CD4-positive, alpha-beta T cell (primary cell): ENCODE measurements at regions of chr2 and their contacts with region 1.

Region 1: DNA sequence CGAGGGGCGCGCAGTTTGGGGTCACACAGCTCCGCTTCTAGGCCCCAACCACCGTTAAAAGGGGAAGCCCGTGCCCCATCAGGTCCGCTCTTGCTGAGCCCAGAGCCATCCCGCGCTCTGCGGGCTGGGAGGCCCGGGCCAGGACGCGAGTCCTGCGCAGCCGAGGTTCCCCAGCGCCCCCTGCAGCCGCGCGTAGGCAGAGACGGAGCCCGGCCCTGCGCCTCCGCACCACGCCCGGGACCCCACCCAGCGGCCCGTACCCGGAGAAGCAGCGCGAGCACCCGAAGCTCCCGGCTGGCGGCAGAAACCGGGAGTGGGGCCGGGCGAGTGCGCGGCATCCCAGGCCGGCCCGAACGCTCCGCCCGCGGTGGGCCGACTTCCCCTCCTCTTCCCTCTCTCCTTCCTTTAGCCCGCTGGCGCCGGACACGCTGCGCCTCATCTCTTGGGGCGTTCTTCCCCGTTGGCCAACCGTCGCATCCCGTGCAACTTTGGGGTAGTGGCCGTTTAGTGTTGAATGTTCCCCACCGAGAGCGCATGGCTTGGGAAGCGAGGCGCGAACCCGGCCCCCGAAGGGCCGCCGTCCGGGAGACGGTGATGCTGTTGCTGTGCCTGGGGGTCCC is at the start of gene ITGA4:
- DNase-seq: peak; percentile 77 to 94 (median 86)
- ATAC-seq: peak; percentile 84
- H3K4me3 ChIP-seq: peak within 1 kb of the TSS; percentile 91
- H3K4me3 Mint-ChIP-seq: peak within 1 kb of the TSS; percentile 93
- H3K27ac ChIP-seq: peak within 1 kb of the TSS; percentile 73 to 93
- H3K27ac Mint-ChIP-seq: peak within 1 kb of the TSS; percentile 84
- H3K4me1 ChIP-seq: peaks cover 23% of the 10 kb centered on the region
- H3K4me1 Mint-ChIP-seq: peaks cover 77% of the 10 kb centered on the region
- H3K27me3 ChIP-seq: no peaks in the 10 kb centered on the region
- H3K27me3 Mint-ChIP-seq: no peaks in the 10 kb centered on the region
- CTCF ChIP-seq: peak; percentile 81
- total RNA-seq, gene ITGA4: 79.4 to 79.5 TPM

Region 2: DNA sequence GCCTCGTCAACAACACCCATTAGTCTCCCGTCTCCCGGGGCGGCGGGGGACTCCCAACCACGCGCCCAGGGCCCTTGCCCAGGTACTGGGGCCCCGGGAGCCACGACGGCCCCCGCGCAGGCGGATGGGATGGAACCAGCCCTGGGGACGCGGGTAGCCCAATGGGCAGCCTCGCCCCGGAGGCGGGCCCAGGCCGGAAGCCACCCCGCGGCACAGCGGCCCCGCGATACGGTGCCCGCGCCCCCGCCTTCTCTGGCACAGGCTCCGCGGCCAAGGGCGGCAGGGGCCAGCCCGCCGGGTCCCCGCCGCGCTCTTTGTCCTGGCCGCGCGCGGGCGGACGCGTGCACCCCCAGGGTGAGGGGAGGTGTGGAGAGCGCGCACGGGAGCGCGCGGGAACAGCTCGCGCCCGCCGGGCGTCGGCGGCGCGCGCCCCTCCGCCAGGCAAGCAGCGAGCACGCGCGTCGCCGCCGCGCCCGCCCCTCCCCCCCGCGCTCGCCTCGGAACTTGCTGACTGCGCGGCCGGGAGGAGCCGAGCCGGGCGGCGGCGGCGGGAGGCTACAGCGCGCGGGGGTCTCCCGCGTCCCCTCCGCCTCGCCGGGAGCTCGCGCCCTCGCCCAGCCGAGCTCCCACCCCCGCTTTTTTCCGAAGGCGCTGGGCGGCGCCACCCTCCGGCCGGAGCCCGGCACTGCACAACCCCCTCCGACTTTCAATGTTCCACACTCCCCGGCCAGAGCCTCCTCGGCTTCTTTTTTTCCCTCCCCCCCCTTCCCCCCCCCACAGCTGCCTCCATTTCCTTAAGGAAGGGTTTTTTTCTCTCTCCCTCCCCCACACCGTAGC is 476.9 kb before region 1 on chr2 and contains the start of gene UBE2E3:
- CTCF ChIA-PET with region 1: interaction called, 4 read pairs
- POLR2A ChIA-PET with region 1: interaction called, 10 read pairs
- intact Hi-C with region 1: loop called (anchors 5 to 10 kb)
- DNase-seq: peak; percentile 62 to 90 (median 70)
- ATAC-seq: peak; percentile 77
- H3K4me3 ChIP-seq: peak within 1 kb of the TSS; percentile 77
- H3K4me3 Mint-ChIP-seq: peak within 1 kb of the TSS; percentile 94
- H3K27ac ChIP-seq: peak within 1 kb of the TSS in 1 of 2 donors; percentile 20
- H3K27ac Mint-ChIP-seq: peak within 1 kb of the TSS; percentile 92
- H3K4me1 ChIP-seq: peaks cover 17% of the 10 kb centered on the region
- H3K4me1 Mint-ChIP-seq: peaks cover 49% of the 10 kb centered on the region
- H3K27me3 ChIP-seq: no peaks in the 10 kb centered on the region
- H3K27me3 Mint-ChIP-seq: no peaks in the 10 kb centered on the region
- CTCF ChIP-seq: peak; percentile 39
- total RNA-seq, gene UBE2E3: 20.5 TPM

Region 3: GRCh38 chr2:181104512-181105115 is 352.6 kb before region 1 on chr2:
- CTCF ChIA-PET with region 1: interaction called, 20 read pairs
- POLR2A ChIA-PET with region 1: interaction called, 24 read pairs
- intact Hi-C with region 1: loop called (anchors 2 kb)
- DNase-seq: peak in 4 of 14 experiments; percentile 49 to 79 (median 75)
- ATAC-seq: peak; percentile 49
- H3K4me3 ChIP-seq: no peak overlapping the region
- H3K4me3 Mint-ChIP-seq: no peak overlapping the region
- H3K27ac ChIP-seq: no peak overlapping the region
- H3K27ac Mint-ChIP-seq: no peak overlapping the region
- H3K4me1 ChIP-seq: peaks cover 19% of the 10 kb centered on the region
- H3K4me1 Mint-ChIP-seq: peaks cover 43% of the 10 kb centered on the region
- H3K27me3 ChIP-seq: no peaks in the 10 kb centered on the region
- H3K27me3 Mint-ChIP-seq: no peaks in the 10 kb centered on the region
- CTCF ChIP-seq: peak; percentile 98

Region 4: GRCh38 chr2:181178823-181179412 is 278.3 kb before region 1 on chr2:
- CTCF ChIA-PET with region 1: interaction called, 3 read pairs
- POLR2A ChIA-PET with region 1: no interaction called
- intact Hi-C with region 1: loop called in 1 of 2 experiments (anchors 5 kb)
- DNase-seq: peak in 11 of 14 experiments; percentile 9 to 71 (median 28)
- ATAC-seq: peak; percentile 81
- H3K4me3 ChIP-seq: no peak overlapping the region
- H3K4me3 Mint-ChIP-seq: no peak overlapping the region
- H3K27ac ChIP-seq: no peak overlapping the region
- H3K27ac Mint-ChIP-seq: peak overlapping the region; percentile 53
- H3K4me1 ChIP-seq: peaks cover 7% of the 10 kb centered on the region
- H3K4me1 Mint-ChIP-seq: peaks cover 47% of the 10 kb centered on the region
- H3K27me3 ChIP-seq: no peaks in the 10 kb centered on the region
- H3K27me3 Mint-ChIP-seq: no peaks in the 10 kb centered on the region
- CTCF ChIP-seq: peak; percentile 59

Region 5: DNA sequence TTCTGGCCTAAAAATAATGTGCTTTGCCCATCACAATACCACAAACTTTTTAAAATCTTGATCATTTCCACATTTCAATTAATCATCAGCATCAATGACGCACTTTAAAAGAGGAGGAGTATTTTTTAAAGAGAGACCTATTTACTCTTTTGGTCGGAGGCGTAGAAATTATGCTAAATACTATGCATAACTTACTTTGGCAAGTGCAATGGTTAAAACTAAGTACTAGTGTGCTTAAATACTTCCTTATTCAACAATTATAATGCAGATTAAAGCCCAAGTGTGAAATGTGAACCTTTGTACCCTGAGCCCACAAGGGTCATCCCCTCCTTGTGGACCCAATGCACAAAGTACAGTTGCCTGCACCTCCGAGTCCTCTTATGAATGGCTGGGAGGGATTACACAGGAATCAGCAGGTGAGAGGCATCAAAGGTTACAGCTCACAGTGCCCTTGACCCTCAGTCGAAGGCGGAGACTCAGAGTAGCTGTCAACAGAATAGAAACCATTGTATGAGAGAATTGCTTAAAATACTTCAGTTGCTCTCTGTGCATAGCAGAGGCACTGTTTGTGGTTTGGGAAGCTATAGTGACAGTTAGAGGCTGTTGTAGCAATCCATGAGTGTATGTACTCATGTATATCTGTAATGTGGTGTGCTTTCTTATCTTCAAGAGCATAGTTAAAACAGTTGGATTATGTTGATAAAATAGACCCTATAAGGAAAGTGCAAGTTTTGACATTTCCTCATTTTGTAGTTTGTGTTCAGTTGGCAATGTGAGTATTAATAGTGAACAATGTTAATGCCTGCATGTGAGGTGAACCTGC is 151.7 kb before region 1 on chr2:
- CTCF ChIA-PET with region 1: interaction called, 5 read pairs
- POLR2A ChIA-PET with region 1: interaction called, 115 read pairs
- intact Hi-C with region 1: loop called (anchors 2 to 5 kb)
- DNase-seq: peak in 13 of 14 experiments; percentile 9 to 81 (median 37)
- ATAC-seq: peak; percentile 77
- H3K4me3 ChIP-seq: no peak overlapping the region
- H3K4me3 Mint-ChIP-seq: peak overlapping the region; percentile 79
- H3K27ac ChIP-seq: peak overlapping the region; percentile 78 to 84
- H3K27ac Mint-ChIP-seq: peak overlapping the region; percentile 95
- H3K4me1 ChIP-seq: peaks cover 34% of the 10 kb centered on the region
- H3K4me1 Mint-ChIP-seq: peaks cover 85% of the 10 kb centered on the region
- H3K27me3 ChIP-seq: no peaks in the 10 kb centered on the region
- H3K27me3 Mint-ChIP-seq: no peaks in the 10 kb centered on the region
- CTCF ChIP-seq: no peak

Region 6: DNA sequence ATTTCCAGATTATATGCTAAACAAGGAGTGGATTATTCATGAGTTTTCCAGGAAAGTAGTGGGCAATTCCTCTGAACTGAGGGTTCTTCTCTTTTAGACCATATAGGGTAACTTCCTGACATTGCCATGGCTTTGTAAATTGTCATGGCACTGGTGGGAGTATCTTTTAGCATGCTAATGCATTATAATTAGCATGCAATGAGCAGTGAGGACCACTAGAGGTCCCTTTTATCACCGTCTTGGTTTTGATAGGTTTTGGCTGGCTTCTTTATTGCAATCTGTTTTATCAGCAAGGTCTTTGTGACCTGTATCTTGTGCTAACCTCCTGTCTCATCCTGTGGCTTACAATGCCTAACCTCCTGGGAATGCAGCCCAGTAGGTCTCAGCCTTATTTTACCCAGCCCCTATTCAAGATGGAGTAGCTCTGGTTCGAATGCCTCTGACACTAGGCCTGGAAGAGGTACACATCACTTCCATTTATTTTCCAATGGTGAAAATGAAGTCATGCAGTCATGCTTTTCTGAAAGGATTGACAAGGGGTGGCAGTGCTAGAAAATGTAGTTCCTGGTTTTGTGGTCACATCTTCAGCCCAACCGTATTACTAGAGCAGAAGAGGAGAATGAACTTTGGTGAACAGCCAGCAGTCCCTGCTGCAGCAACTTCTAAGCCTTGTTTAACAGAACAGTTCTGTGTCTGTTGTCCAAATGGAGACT is 26.7 kb before region 1 on chr2:
- CTCF ChIA-PET with region 1: no interaction called
- POLR2A ChIA-PET with region 1: interaction called, 6 read pairs
- intact Hi-C with region 1: loop called in 1 of 2 experiments (anchors 2 kb)
- DNase-seq: peak in 3 of 14 experiments; percentile 63 to 69 (median 64)
- ATAC-seq: peak; percentile 61
- H3K4me3 ChIP-seq: no peak overlapping the region
- H3K4me3 Mint-ChIP-seq: no peak overlapping the region
- H3K27ac ChIP-seq: no peak overlapping the region
- H3K27ac Mint-ChIP-seq: no peak overlapping the region
- H3K4me1 ChIP-seq: peaks cover 9% of the 10 kb centered on the region
- H3K4me1 Mint-ChIP-seq: peaks cover 14% of the 10 kb centered on the region
- H3K27me3 ChIP-seq: no peaks in the 10 kb centered on the region
- H3K27me3 Mint-ChIP-seq: no peaks in the 10 kb centered on the region
- CTCF ChIP-seq: peak; percentile 29

Region 7: DNA sequence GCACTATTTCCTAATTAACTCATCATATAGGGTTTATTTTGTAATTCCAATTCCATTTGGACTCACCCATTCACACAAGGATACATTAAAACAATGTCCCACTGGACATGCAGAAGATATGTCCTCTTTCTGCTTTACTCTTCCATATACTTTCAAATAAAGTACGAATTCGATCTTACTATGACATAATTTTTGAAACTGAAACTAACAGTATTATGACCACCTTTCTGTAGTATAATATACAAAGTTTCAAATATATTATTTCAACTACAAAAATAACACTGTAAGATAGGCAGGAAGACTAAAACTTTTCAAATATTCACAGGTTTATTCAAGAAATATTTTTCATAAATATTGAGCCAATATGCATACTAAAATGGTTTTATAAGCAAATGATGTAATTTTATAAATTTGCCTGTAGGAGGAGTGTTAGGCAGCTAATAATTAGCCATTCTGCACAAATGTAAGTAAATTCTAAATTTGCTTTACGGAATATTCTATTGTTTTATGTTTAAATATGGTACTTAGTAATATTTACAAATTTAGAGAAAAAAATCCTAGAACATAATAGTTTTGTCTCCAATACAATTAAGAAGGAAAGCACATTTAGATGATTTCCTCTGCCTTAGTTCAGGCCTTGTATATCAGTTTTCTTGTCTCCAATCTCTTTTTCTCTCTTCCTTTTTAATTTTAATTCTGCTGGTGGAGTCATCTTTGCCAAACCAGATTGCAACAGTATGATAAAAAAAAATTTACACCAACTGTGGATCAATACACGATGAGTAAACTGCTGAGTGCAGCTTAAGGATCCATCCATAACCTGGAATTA is 113.8 kb after region 1 on chr2:
- CTCF ChIA-PET with region 1: no interaction called
- POLR2A ChIA-PET with region 1: no interaction called
- intact Hi-C with region 1: no loop called
- DNase-seq: peak in 1 of 14 experiments; percentile 5
- ATAC-seq: no peak
- H3K4me3 ChIP-seq: no peak overlapping the region
- H3K4me3 Mint-ChIP-seq: no peak overlapping the region
- H3K27ac ChIP-seq: no peak overlapping the region
- H3K27ac Mint-ChIP-seq: no peak overlapping the region
- H3K4me1 ChIP-seq: no peaks in the 10 kb centered on the region
- H3K4me1 Mint-ChIP-seq: no peaks in the 10 kb centered on the region
- H3K27me3 ChIP-seq: no peaks in the 10 kb centered on the region
- H3K27me3 Mint-ChIP-seq: peaks cover 5% of the 10 kb centered on the region
- CTCF ChIP-seq: peak; percentile 34

Region 8: DNA sequence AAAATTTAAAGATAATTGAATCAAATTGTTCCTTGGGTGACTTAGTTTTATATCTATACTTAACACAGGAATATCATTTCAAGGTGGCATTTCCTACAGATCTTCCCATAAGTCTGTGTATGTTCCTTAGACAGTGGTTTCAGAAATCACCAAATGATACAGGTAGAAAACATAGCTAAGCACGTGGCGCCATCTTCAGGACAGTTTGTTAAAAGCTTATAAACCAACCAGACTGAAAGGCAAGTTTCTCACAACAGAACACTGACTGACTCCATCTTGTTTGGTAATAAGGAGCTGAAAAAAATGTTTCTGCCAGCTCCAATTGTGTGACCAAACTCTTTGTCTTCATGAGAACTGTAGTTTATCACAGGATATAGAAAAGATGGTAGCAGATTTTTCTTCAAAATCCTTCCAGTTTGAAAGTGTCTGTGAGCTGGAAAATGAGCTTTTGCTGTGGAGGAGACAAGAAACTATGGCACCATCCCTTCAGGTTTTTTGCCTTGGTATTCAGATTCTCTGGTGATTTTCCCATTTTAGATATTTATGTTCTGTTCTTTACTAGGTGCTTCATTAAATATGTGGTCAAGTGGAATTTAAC is 257.9 kb after region 1 on chr2:
- CTCF ChIA-PET with region 1: no interaction called
- POLR2A ChIA-PET with region 1: interaction called, 3 read pairs
- intact Hi-C with region 1: loop called in 1 of 2 experiments (anchors 10 kb)
- DNase-seq: peak; percentile 30 to 86 (median 60)
- ATAC-seq: peak; percentile 80
- H3K4me3 ChIP-seq: no peak overlapping the region
- H3K4me3 Mint-ChIP-seq: no peak overlapping the region
- H3K27ac ChIP-seq: no peak overlapping the region
- H3K27ac Mint-ChIP-seq: no peak overlapping the region
- H3K4me1 ChIP-seq: no peaks in the 10 kb centered on the region
- H3K4me1 Mint-ChIP-seq: no peaks in the 10 kb centered on the region
- H3K27me3 ChIP-seq: no peaks in the 10 kb centered on the region
- H3K27me3 Mint-ChIP-seq: no peaks in the 10 kb centered on the region
- CTCF ChIP-seq: peak; percentile 72